ENCODE measurements at regions of chr20 and their contacts with region 1.

Region 1: GRCh38 chr20:49219089-49219923 is at the start of gene DDX27:
- DNase-seq: peak; percentile 98
- ATAC-seq: peak; percentile 90
- H3K4me3 Mint-ChIP-seq: peak within 1 kb of the TSS; percentile 90
- H3K27ac Mint-ChIP-seq: peak within 1 kb of the TSS; percentile 96
- H3K4me1 Mint-ChIP-seq: peaks cover 28% of the 10 kb centered on the region
- H3K27me3 Mint-ChIP-seq: no peaks in the 10 kb centered on the region
- total RNA-seq, gene DDX27: 38.3 to 38.6 TPM

Region 2: GRCh38 chr20:49046087-49046900 is 173.0 kb before region 1 on chr20 and contains the start of gene CSE1L:
- CTCF ChIA-PET with region 1: interaction called, 16 read pairs
- POLR2A ChIA-PET with region 1: interaction called, 12 read pairs
- DNase-seq: peak; percentile 96
- ATAC-seq: peak; percentile 92
- H3K4me3 Mint-ChIP-seq: peak within 1 kb of the TSS; percentile 99
- H3K27ac Mint-ChIP-seq: peak within 1 kb of the TSS; percentile 100
- H3K4me1 Mint-ChIP-seq: peaks cover 38% of the 10 kb centered on the region
- H3K27me3 Mint-ChIP-seq: no peaks in the 10 kb centered on the region
- total RNA-seq, gene CSE1L: 98.0 to 102 TPM

Region 3: DNA sequence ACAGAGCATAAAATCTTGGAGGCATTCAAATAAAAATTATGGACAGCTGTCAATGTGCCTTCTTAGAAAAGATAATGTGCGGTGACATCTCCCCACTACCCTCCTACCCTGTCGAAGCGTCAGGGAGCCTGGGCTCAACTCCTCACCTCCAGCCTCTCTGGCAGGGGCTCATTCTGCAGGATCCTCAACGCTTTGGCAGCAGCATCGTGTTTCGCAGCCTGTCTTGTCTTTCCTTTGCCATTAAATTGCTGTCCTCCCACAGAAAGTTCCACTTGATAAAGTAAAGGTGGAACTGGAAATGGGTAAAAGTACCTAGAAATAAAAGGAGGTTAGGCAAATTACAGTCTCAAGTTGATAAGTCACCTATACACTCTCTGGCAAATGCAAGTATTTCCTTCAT is 67.9 kb before region 1 on chr20:
- CTCF ChIA-PET with region 1: interaction called, 11 read pairs
- POLR2A ChIA-PET with region 1: no interaction called
- DNase-seq: no peak
- ATAC-seq: no peak
- H3K4me3 Mint-ChIP-seq: no peak overlapping the region
- H3K27ac Mint-ChIP-seq: no peak overlapping the region
- H3K4me1 Mint-ChIP-seq: peaks cover 10% of the 10 kb centered on the region
- H3K27me3 Mint-ChIP-seq: no peaks in the 10 kb centered on the region

Region 4: GRCh38 chr20:49179368-49180277 is 39.7 kb before region 1 on chr20:
- CTCF ChIA-PET with region 1: interaction called, 58 read pairs
- POLR2A ChIA-PET with region 1: no interaction called
- DNase-seq: no peak
- ATAC-seq: no peak
- H3K4me3 Mint-ChIP-seq: no peak overlapping the region
- H3K27ac Mint-ChIP-seq: peak overlapping the region; percentile 54
- H3K4me1 Mint-ChIP-seq: peaks cover 53% of the 10 kb centered on the region
- H3K27me3 Mint-ChIP-seq: no peaks in the 10 kb centered on the region

Region 5: GRCh38 chr20:49199729-49200293 is 19.5 kb before region 1 on chr20:
- CTCF ChIA-PET with region 1: interaction called, 15 read pairs
- POLR2A ChIA-PET with region 1: no interaction called
- DNase-seq: no peak
- ATAC-seq: no peak
- H3K4me3 Mint-ChIP-seq: no peak overlapping the region
- H3K27ac Mint-ChIP-seq: no peak overlapping the region
- H3K4me1 Mint-ChIP-seq: no peaks in the 10 kb centered on the region
- H3K27me3 Mint-ChIP-seq: no peaks in the 10 kb centered on the region

Region 6: DNA sequence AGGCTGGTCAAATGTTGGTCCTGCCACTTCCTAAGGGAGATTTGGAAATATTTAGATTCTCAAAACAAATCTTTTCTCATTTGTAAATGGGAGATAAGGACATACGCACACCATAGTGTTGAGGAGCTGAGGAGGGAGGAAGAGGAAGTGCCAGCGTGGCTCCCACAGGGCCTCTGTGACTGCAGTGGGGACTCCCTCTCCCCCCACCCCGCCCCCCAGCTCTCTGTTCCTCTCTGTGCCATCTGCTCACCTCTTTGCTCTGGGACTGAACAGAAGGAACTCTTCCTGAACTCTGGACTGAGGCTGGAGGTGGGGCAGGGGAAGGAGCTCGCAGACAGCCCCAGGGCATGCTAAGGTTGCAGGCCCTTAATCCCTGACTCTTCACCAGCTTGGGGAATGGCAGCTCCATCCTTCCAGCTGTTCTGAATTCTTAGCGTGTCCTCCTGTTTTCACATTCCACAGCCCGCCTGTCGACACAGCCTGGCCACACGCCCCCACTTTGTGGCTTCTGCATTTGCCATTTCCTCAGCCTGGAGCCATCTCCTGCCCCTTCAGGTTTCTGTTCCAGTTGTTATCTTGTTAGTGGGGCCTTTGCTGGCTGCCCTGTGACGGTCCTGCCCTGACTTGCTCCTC is 11.4 kb after region 1 on chr20:
- CTCF ChIA-PET with region 1: interaction called, 18 read pairs
- POLR2A ChIA-PET with region 1: no interaction called
- DNase-seq: no peak
- ATAC-seq: no peak
- H3K4me3 Mint-ChIP-seq: no peak overlapping the region
- H3K27ac Mint-ChIP-seq: peak overlapping the region; percentile 52
- H3K4me1 Mint-ChIP-seq: peaks cover 14% of the 10 kb centered on the region
- H3K27me3 Mint-ChIP-seq: no peaks in the 10 kb centered on the region

Region 7: DNA sequence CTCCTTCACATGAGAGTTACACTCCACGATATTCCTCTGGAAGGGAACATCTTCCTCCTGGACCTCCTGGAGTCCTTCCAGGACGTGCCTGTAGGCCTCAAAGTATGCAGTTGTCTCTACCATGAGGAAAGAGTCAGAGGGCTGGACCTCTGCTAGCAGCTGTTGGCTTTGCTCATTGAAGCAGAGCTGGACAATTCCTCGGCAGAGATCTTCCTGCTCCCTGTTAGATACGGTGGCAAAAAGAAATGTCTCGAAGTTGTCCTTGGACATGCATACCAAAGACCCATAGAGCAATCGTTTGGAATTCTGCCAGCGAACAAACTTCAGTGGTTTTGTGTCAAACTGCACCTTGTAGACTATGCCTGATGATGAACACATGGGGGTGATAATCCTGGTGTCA is 50.9 kb after region 1 on chr20:
- CTCF ChIA-PET with region 1: interaction called, 10 read pairs
- POLR2A ChIA-PET with region 1: no interaction called
- DNase-seq: no peak
- ATAC-seq: no peak
- H3K4me3 Mint-ChIP-seq: peak overlapping the region; percentile 69
- H3K27ac Mint-ChIP-seq: no peak overlapping the region
- H3K4me1 Mint-ChIP-seq: peaks cover 67% of the 10 kb centered on the region
- H3K27me3 Mint-ChIP-seq: no peaks in the 10 kb centered on the region

Region 8: DNA sequence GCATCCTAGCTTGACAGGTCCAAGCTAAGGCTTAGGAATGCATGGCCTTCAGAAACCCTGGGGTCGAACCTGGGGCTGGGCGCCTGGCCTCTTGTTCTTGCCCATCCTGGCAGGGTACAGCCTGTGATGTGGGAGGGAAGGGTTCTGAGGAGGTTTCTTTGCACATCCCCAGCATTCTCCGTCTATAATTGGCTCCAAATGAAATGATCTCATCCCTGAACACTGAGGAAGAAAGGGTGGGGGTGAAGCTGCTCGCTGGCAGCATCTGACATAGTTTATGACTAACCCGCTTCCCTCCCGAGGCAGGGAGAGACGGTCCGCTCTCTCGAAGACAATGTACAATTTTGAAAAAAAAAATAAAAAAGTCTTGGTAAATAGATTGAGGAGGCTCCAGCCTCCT is 125.7 kb after region 1 on chr20:
- CTCF ChIA-PET with region 1: no interaction called
- POLR2A ChIA-PET with region 1: no interaction called
- DNase-seq: no peak
- ATAC-seq: no peak
- H3K4me3 Mint-ChIP-seq: no peak overlapping the region
- H3K27ac Mint-ChIP-seq: no peak overlapping the region
- H3K4me1 Mint-ChIP-seq: peaks cover 5% of the 10 kb centered on the region
- H3K27me3 Mint-ChIP-seq: peaks cover 16% of the 10 kb centered on the region

Measured in activated CD8-positive, alpha-beta T cell treated with anti-CD3 and anti-CD28 coated beads, Interleukin-2, amount 10 ng/mL, durations not matched to agents 7 days and 5 days (primary cell).